ENCODE measurements at regions of chr7 and their contacts with region 1.

Region 1: DNA sequence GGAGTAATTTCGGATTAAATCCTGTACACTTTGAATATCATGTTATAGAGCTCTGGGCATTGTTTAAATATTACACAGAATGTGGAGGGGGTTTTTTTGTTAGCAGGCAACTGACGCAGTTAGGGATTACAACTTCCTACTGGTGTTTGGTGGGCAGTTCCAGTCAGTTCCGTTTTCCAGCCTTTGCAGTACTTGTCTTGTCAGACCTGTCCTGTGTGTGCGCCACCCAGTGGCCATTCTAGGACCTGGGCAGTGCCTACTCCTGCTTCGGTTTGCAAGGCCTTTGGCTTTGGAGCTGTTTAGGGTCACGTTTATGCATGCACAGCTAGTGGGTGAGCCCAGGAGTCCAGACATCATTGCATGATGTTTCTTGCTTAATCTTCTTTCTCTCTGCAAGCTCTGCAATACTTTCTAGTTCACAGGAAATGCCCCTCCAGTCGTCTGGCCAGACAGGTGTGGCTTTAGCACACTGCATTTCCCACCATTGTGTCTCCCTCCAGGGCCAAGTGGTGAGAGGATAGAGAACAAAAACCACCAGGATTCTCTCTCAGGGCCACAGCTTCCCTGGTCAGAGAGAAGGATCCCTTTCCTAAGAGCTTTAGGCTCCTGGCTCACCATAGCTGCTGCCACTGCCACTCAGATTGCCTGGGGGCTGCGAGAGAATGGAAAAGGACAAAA is 96.5 kb upstream of the TARP start:
- DNase-seq: peak; percentile 44 to 91 (median 86)
- ATAC-seq: peak; percentile 67
- H3K4me3 ChIP-seq: peak overlapping the region in 1 of 2 experiments; percentile 6
- H3K4me3 Mint-ChIP-seq: peak overlapping the region; percentile 57
- H3K27ac ChIP-seq: peak overlapping the region; percentile 36 to 79
- H3K27ac Mint-ChIP-seq: peak overlapping the region; percentile 93
- H3K4me1 ChIP-seq: peaks cover 61% of the 10 kb centered on the region
- H3K4me1 Mint-ChIP-seq: peaks cover 80% of the 10 kb centered on the region
- H3K27me3 ChIP-seq: no peaks in the 10 kb centered on the region
- H3K27me3 Mint-ChIP-seq: no peaks in the 10 kb centered on the region
- CTCF ChIP-seq: peak; percentile 77

Region 2: GRCh38 chr7:37901236-37901827 is 468.6 kb before region 1 on chr7:
- CTCF ChIA-PET with region 1: no interaction called
- POLR2A ChIA-PET with region 1: no interaction called
- intact Hi-C with region 1: loop called in 1 of 2 experiments (anchors 2 kb)
- DNase-seq: peak in 2 of 9 experiments; percentile 23 to 40
- ATAC-seq: no peak
- H3K4me3 ChIP-seq: no peak overlapping the region
- H3K4me3 Mint-ChIP-seq: no peak overlapping the region
- H3K27ac ChIP-seq: no peak overlapping the region
- H3K27ac Mint-ChIP-seq: no peak overlapping the region
- H3K4me1 ChIP-seq: no peaks in the 10 kb centered on the region
- H3K4me1 Mint-ChIP-seq: no peaks in the 10 kb centered on the region
- H3K27me3 ChIP-seq: no peaks in the 10 kb centered on the region
- H3K27me3 Mint-ChIP-seq: peaks cover 2% of the 10 kb centered on the region
- CTCF ChIP-seq: no peak

Region 3: DNA sequence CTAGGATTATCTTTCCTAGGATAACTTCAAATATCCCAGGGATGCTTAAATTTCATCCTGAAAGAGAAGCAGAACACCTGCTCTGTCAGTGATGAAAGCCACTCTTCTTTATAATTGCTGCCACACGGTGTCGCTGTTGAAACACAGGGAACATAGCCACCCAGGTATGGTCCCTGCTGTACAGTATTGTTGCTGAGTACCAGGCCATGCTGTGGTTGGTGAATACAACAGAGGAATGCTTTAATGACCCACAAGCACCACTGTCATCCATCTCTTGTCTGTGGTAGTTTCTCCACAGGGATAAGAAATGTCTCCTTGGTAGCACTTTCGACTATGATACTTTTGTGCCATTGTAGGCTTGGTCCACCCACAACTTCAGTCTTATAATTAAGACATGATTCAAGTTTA is 262.5 kb before region 1 on chr7:
- CTCF ChIA-PET with region 1: interaction called, 91 read pairs
- POLR2A ChIA-PET with region 1: interaction called, 3 read pairs
- intact Hi-C with region 1: loop called (anchors 1 kb)
- DNase-seq: peak; percentile 33 to 80 (median 71)
- ATAC-seq: peak; percentile 87
- H3K4me3 ChIP-seq: no peak overlapping the region
- H3K4me3 Mint-ChIP-seq: no peak overlapping the region
- H3K27ac ChIP-seq: no peak overlapping the region
- H3K27ac Mint-ChIP-seq: no peak overlapping the region
- H3K4me1 ChIP-seq: no peaks in the 10 kb centered on the region
- H3K4me1 Mint-ChIP-seq: peaks cover 2% of the 10 kb centered on the region
- H3K27me3 ChIP-seq: peaks cover 0 to 2% of the 10 kb centered on the region in 2 experiments
- H3K27me3 Mint-ChIP-seq: peaks cover 8% of the 10 kb centered on the region
- CTCF ChIP-seq: peak; percentile 89

Region 4: GRCh38 chr7:38195804-38196595 is 174.0 kb before region 1 on chr7:
- CTCF ChIA-PET with region 1: interaction called, 15 read pairs
- POLR2A ChIA-PET with region 1: no interaction called
- intact Hi-C with region 1: no loop called
- DNase-seq: no peak
- ATAC-seq: no peak
- H3K4me3 ChIP-seq: no peak overlapping the region
- H3K4me3 Mint-ChIP-seq: no peak overlapping the region
- H3K27ac ChIP-seq: no peak overlapping the region
- H3K27ac Mint-ChIP-seq: no peak overlapping the region
- H3K4me1 ChIP-seq: no peaks in the 10 kb centered on the region
- H3K4me1 Mint-ChIP-seq: peaks cover 50% of the 10 kb centered on the region
- H3K27me3 ChIP-seq: no peaks in the 10 kb centered on the region
- H3K27me3 Mint-ChIP-seq: no peaks in the 10 kb centered on the region
- CTCF ChIP-seq: no peak

Region 5: GRCh38 chr7:38232502-38233366 is 137.2 kb before region 1 on chr7:
- CTCF ChIA-PET with region 1: interaction called, 29 read pairs
- POLR2A ChIA-PET with region 1: no interaction called
- intact Hi-C with region 1: no loop called
- DNase-seq: peak; percentile 53 to 95 (median 72)
- ATAC-seq: peak; percentile 77
- H3K4me3 ChIP-seq: peak overlapping the region in 1 of 2 experiments; percentile 17
- H3K4me3 Mint-ChIP-seq: peak overlapping the region; percentile 69
- H3K27ac ChIP-seq: peak overlapping the region; percentile 36 to 78
- H3K27ac Mint-ChIP-seq: peak overlapping the region; percentile 94
- H3K4me1 ChIP-seq: peaks cover 45% of the 10 kb centered on the region
- H3K4me1 Mint-ChIP-seq: peaks cover 89% of the 10 kb centered on the region
- H3K27me3 ChIP-seq: no peaks in the 10 kb centered on the region
- H3K27me3 Mint-ChIP-seq: no peaks in the 10 kb centered on the region
- CTCF ChIP-seq: no peak

Region 6: GRCh38 chr7:38351601-38352000 is 18.4 kb before region 1 on chr7:
- CTCF ChIA-PET with region 1: interaction called, 16 read pairs
- POLR2A ChIA-PET with region 1: interaction called, 5 read pairs
- intact Hi-C with region 1: no loop called
- DNase-seq: no peak
- ATAC-seq: no peak
- H3K4me3 ChIP-seq: peak overlapping the region in 1 of 2 experiments; percentile 36
- H3K4me3 Mint-ChIP-seq: peak overlapping the region; percentile 89
- H3K27ac ChIP-seq: peak overlapping the region in 1 of 2 experiments; percentile 4
- H3K27ac Mint-ChIP-seq: peak overlapping the region; percentile 95
- H3K4me1 ChIP-seq: peaks cover 5% of the 10 kb centered on the region
- H3K4me1 Mint-ChIP-seq: peaks cover 62% of the 10 kb centered on the region
- H3K27me3 ChIP-seq: no peaks in the 10 kb centered on the region
- H3K27me3 Mint-ChIP-seq: no peaks in the 10 kb centered on the region
- CTCF ChIP-seq: no peak

Region 7: DNA sequence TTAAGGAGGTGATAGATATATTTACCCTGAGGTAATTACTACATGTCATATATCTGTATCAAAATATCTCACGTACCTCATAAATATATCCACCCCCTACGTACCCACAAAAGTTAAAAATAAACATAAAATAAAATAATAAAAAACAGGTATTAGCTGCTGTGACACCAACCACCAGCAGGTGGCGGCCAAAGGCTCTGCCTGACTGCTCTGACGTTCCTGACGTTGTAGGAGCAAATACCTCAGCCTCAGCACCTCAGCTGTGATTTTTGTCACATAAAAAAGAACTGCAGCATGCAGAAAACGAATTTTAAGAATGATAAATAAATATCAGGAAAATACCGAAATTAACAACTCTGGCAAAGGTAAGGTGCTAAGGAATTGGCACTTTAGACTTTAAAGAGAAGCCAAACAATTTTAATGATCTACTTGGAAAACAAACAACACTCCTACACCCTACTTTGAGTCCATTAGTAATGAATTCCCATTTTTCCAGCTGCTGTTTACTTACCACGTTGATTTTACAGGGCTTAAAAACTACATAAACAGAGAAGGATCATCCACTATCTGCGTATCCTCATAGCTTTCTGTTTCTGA is 28.9 kb after region 1 on chr7:
- CTCF ChIA-PET with region 1: interaction called, 11 read pairs
- POLR2A ChIA-PET with region 1: no interaction called
- intact Hi-C with region 1: no loop called
- DNase-seq: peak in 8 of 9 experiments; percentile 35 to 71 (median 56)
- ATAC-seq: peak; percentile 82
- H3K4me3 ChIP-seq: no peak overlapping the region
- H3K4me3 Mint-ChIP-seq: no peak overlapping the region
- H3K27ac ChIP-seq: no peak overlapping the region
- H3K27ac Mint-ChIP-seq: no peak overlapping the region
- H3K4me1 ChIP-seq: no peaks in the 10 kb centered on the region
- H3K4me1 Mint-ChIP-seq: peaks cover 6% of the 10 kb centered on the region
- H3K27me3 ChIP-seq: no peaks in the 10 kb centered on the region
- H3K27me3 Mint-ChIP-seq: no peaks in the 10 kb centered on the region
- CTCF ChIP-seq: peak; percentile 94